ENCODE measurements at regions of chr15 and their contacts with region 1.

Region 1: DNA sequence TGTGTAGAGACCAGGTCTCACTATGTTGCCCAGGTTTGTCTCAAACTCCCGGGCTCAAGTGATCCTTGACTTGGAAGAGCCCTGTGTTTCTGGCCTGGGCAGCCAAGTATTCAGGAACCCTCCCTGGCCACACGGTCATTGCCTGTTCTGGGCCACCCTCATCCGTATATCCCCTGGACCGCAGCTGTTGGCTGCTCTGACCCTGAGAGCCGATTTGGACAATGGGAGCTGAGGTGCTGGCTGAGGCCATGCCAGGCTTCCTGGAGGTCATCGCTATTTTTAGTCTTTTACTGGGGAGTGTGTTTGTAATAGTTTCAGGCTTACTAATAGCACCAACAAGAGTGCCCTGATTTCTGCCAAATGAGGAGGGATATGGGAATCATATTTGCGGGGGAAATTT is 60.7 kb downstream of the ADAMTS7 start:
- DNase-seq: no peak
- H3K4me3 ChIP-seq: no peak overlapping the region; the same call in 1 of the 2 replicates
- CTCF ChIP-seq: no peak

Region 2: DNA sequence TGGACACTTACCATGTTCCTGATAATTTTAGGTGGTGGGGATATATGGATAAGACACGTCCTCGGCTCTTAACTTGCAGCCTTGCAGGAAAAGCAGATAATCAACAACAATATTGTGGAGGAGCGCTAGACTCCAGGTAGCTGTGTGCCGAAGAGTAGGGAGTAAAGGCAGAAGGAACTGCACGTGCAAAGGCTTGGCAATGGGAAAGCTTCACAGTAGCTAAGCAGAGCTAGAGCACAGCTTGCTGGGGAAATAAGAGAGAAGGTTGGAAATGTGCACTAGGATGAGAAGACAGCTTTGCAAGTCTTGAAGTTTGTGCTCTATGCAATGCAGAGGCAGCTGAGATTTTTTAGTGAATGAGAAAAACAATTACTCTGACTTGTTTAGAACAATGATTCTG is 198.0 kb before region 1 on chr15:
- CTCF ChIA-PET with region 1: no interaction called
- POLR2A ChIA-PET with region 1: no interaction called
- DNase-seq: no peak
- H3K4me3 ChIP-seq: no peak overlapping the region
- CTCF ChIP-seq: no peak

Region 3: DNA sequence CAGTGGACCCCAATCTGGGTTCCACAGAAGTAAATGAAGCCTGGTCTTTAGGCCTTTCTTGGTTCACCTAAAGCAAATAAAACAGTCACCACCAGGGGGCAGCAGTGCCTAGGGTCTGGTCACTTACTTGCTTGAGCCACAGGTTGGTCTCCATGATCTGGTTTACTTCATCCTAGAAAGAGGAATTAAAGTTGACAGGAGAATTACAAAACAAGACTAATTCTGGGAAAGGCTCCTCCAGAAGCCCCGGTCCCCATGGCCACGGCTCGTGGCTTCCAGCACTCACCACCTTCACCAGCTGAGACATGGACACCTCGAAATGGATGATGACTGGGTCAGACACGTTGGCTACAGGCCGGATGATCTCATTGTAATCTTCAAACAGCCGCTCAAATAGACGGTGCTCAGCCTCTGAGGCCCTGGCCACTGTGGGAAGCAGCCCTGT is 132.1 kb before region 1 on chr15:
- CTCF ChIA-PET with region 1: interaction called, 13 read pairs
- POLR2A ChIA-PET with region 1: no interaction called
- DNase-seq: peak; percentile 52
- H3K4me3 ChIP-seq: no peak overlapping the region
- CTCF ChIP-seq: peak; percentile 77

Region 4: GRCh38 chr15:78739996-78740903 is 10.3 kb before region 1 on chr15:
- CTCF ChIA-PET with region 1: interaction called, 25 read pairs
- POLR2A ChIA-PET with region 1: no interaction called
- DNase-seq: no peak
- H3K4me3 ChIP-seq: no peak overlapping the region
- CTCF ChIP-seq: peak; percentile 62